Activated CD4-positive, alpha-beta memory T cell treated with anti-CD3 and anti-CD28 coated beads, Interleukin-2, amount 10 ng/mL, durations not matched to agents 7 days and 5 days (primary cell): ENCODE measurements at regions of chr14 and their contacts with region 1.

Region 1: GRCh38 chr14:34227834-34228649 is 234.0 kb downstream of the SPTSSA start:
- DNase-seq: peak; percentile 67
- H3K4me3 Mint-ChIP-seq: peak overlapping the region; percentile 34
- H3K27ac Mint-ChIP-seq: no peak overlapping the region
- H3K4me1 Mint-ChIP-seq: peaks cover 12% of the 10 kb centered on the region
- H3K27me3 Mint-ChIP-seq: peaks cover 19% of the 10 kb centered on the region

Region 2: DNA sequence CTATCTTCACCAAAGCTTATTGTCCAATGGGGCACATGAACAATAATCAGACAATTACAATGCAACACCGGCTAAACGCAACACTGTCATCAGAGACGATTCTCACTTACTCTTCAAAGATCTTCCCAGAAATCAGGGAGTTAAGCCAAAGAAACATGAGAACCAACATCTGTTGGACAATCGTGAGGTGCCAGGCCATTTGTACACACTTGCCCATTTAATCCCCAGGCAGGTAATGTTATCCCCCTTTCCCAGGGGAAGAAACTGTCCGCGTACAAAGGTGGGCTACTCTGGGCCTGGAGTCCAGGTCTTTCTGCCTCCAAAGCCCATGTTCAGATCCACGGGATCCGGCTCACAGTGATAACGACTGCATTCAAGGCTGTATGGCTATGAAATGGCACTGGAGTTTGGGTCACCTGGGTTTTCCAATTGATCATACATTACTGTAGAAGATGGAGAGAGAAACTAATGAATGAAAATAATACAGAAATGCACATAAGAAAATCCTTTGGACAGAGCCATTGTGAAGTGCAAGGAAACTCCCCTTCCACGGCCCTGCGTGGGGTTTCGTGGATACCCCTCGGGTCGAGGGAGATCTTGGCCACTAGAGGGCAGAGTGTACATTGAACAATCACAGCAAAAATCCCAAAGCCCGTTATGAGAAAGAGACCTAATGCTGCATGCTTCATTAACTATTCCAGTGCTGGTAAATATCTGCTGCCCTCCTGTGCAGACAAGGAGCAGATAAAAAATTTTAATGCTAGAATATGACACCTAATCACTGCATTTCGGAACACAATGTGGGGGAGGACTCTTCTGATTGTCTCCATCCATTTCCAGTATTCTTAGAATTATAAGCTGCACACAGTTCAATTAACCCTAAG is 388.6 kb before region 1 on chr14:
- CTCF ChIA-PET with region 1: interaction called, 32 read pairs
- POLR2A ChIA-PET with region 1: no interaction called
- DNase-seq: peak; percentile 61
- H3K4me3 Mint-ChIP-seq: no peak overlapping the region
- H3K27ac Mint-ChIP-seq: no peak overlapping the region
- H3K4me1 Mint-ChIP-seq: peaks cover 7% of the 10 kb centered on the region
- H3K27me3 Mint-ChIP-seq: no peaks in the 10 kb centered on the region

Region 3: GRCh38 chr14:33859306-33859705 is 368.7 kb before region 1 on chr14:
- CTCF ChIA-PET with region 1: no interaction called
- POLR2A ChIA-PET with region 1: no interaction called
- DNase-seq: no peak
- H3K4me3 Mint-ChIP-seq: no peak overlapping the region
- H3K27ac Mint-ChIP-seq: no peak overlapping the region
- H3K4me1 Mint-ChIP-seq: peaks cover 22% of the 10 kb centered on the region
- H3K27me3 Mint-ChIP-seq: peaks cover 8% of the 10 kb centered on the region

Region 4: GRCh38 chr14:34347683-34348082 is 119.6 kb after region 1 on chr14:
- CTCF ChIA-PET with region 1: no interaction called
- POLR2A ChIA-PET with region 1: no interaction called
- DNase-seq: no peak
- H3K4me3 Mint-ChIP-seq: no peak overlapping the region
- H3K27ac Mint-ChIP-seq: no peak overlapping the region
- H3K4me1 Mint-ChIP-seq: no peaks in the 10 kb centered on the region
- H3K27me3 Mint-ChIP-seq: no peaks in the 10 kb centered on the region